ENCODE measurements at regions of chr3 and their contacts with region 1.

Region 1: DNA sequence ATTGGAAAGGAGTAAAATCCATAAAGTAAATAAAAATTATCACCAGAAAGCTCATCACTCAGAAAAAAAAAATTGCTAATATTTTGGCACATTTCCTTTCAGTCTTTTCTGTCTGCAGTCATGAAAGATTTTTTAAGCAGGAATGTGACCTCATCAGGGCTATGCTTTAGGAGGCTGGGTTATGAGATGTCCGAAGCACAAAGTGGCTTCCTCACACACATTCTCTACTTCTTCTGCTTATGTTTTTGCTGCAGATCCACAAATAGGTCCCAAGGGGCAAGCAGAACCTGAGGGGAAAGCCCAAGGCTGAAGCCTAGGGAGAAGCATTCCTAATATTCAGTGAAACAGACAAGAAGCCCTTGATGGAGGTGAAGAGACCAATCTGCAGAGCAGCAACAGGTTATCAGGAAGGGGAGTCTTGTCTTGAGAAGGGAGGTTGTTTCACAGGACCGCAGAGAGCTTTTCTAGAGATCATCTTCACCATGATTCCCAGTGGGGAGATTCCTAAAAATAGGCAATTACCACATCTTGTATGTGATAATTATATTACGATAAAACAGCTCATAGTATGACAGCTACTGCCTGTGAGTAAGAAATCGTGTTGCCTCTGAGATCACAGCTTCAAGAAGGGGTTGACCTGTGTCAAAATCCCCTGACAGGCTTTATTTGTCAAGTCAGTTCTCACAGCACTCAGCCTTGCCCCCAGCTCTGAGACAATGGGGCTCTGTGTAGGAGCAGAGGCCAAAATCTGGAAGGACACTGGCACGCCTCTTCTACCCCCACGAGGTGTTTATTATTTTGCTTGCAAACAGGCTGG is 60.5 kb downstream of the IGF2BP2 start:
- DNase-seq: no peak
- H3K4me3 ChIP-seq: no peak overlapping the region
- H3K27ac ChIP-seq: no peak overlapping the region
- H3K27me3 ChIP-seq: no peaks in the 10 kb centered on the region
- CTCF ChIP-seq: no peak

Region 2: DNA sequence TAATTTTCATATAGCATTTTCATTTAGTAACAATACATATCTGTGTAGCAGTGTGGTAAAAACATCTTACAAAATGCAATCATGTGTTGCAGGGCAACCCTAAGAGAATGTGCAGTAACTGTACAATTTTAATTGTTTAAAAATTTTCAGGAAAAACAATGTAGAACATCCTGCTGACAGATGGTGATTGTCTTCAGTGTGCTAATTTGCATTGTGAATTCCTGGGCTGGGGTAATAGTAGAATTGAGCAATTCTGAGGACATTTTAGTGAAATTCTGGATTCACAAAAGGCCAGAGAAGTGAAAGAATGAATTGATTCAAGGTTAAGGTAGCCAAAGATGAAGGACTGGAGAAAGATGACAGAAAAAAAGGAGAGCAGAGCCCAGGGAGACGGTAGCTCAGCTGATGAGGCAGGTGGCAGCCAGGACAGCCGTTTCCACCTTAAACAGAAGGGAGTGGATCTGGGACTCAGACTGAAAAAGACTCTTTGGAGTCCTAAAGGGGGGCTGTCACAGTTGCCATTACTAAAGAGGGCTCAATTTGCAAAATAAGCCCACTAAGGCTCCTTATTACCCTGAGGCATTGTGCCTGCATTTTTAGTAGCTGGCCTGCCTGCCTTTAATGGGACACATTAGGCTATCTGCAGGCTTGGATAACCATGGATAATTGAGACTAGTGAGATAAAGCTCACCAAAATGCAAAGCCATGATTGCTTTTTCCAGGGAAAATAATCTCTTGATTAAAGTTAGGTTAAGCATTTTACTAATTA is 392.9 kb before region 1 on chr3:
- CTCF ChIA-PET with region 1: no interaction called
- POLR2A ChIA-PET with region 1: no interaction called
- DNase-seq: no peak
- H3K4me3 ChIP-seq: no peak overlapping the region
- H3K27ac ChIP-seq: no peak overlapping the region
- H3K27me3 ChIP-seq: no peaks in the 10 kb centered on the region
- CTCF ChIP-seq: no peak

Region 3: GRCh38 chr3:185423178-185423577 is 341.2 kb before region 1 on chr3:
- CTCF ChIA-PET with region 1: no interaction called
- POLR2A ChIA-PET with region 1: no interaction called
- DNase-seq: no peak
- H3K4me3 ChIP-seq: no peak overlapping the region
- H3K27ac ChIP-seq: no peak overlapping the region
- H3K27me3 ChIP-seq: no peaks in the 10 kb centered on the region
- CTCF ChIP-seq: no peak

Region 4: DNA sequence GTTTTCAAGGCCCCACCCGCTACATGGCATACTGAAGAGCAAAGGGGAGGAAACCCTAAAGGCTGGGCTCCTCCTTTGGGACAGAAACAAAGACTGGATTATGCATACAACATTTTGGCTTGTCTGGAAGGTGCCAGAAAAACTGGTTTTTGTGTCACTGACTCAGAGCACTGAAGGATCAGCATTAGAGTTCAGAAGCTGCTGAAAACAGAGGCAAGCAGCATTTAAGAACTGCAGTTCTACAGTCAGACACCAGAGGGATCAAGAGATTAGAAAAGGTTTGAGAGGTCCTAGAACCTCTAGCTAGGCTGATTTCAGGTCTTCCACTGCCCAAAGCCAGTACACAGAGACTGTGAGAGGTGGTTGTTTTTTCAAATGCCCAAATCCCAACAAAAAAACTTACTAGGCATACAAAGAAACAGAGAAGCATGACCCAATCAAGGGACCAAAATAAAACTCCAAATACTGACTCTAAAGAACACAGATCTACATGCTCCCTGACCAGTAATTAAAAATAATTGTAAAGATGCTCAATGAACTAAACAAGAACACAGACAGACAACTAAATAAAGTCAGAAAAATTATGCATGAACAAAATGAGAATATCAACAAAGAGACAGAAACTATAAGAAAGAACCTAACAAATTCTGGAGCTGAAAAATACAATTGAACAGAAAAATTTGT is 87.1 kb before region 1 on chr3:
- CTCF ChIA-PET with region 1: interaction called, 14 read pairs
- POLR2A ChIA-PET with region 1: no interaction called
- DNase-seq: peak; percentile 56
- H3K4me3 ChIP-seq: no peak overlapping the region
- H3K27ac ChIP-seq: no peak overlapping the region
- H3K27me3 ChIP-seq: no peaks in the 10 kb centered on the region
- CTCF ChIP-seq: peak; percentile 84

Region 5: DNA sequence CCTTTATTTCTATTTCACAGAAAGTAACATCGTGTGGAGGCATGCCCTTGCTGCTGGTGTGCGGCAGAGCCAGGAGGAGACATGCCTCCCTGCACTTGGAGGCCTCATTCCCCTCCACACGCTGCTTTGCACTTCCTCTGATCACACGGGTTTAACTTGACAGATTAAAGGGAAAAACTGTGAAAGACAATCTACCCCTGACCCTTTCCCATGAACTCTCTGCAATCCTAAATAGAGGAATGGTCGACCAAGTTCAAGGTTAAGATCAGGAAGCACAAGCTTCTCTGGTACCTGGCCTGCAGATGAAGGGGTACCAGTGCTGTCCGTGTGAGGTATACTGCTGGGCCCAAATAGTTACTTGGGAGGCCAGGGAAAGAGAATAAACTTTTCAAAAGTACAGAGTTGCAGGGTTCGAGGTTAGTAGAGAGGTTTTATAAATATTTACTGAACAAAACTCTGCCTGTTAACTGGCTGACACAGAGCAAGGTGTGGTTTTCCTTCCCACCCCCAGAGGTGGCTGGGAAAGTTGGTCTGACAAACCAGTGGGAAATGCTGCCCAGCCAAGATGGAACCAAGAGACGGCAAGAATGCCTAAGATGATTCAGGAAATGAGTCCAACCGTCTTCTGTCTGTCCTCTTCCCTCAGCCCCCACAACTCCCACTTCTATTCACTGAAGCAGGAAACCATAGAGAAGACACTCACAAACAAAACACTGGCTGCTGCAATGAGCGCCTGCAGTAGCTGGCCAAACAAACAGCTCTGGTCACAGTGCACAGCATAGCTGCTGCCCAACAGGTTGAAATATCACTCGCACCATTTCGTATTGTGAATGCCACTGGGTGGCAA is 19.2 kb before region 1 on chr3:
- CTCF ChIA-PET with region 1: interaction called, 18 read pairs
- POLR2A ChIA-PET with region 1: interaction called, 3 read pairs
- DNase-seq: peak; percentile 64
- H3K4me3 ChIP-seq: no peak overlapping the region
- H3K27ac ChIP-seq: peak overlapping the region; percentile 71
- H3K27me3 ChIP-seq: no peaks in the 10 kb centered on the region
- CTCF ChIP-seq: no peak

Region 6: DNA sequence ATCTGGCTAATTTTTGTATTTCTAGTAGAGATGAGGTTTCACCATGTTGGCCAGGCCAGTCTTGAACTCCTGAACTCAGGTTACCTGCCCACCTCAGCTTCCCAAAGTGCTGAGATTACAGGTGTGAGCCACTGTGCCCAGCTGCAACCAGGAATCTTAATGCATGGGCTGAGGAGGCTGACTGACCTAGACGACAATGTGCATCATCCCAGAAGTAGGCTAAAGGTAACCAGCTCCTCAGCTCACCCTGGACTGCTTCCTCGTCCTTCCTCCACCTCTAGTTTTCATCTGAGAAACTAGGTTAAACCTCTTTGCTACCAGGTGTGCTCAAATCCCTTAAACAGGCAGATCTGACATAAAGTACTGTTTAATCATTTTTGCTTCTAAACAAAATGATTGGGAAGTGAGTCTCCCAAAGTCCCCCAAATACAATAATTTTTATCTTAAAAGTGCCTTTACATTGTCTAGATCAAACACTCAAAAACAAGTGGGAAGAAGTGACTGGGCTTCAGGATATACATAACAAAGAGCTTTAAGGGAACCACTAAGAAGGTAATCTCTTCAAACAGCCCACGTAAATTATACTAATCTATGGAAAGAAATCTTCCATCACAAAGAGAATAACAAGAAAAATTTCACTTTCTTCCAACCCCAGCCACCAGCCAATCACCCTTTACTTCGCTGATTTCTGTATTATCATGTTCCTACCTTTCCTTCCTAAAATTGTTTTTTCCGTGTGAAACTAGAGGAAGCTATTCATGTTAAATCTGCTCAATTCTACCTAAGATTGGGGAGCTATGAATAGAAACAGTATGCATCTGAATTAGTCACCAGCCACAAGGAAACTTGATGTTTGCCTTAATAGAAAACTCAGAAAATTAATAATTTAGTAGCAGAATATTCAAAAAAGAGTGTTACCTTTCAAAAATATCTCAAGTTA is 25.8 kb after region 1 on chr3:
- CTCF ChIA-PET with region 1: interaction called, 35 read pairs
- POLR2A ChIA-PET with region 1: no interaction called
- DNase-seq: no peak
- H3K4me3 ChIP-seq: no peak overlapping the region
- H3K27ac ChIP-seq: no peak overlapping the region
- H3K27me3 ChIP-seq: no peaks in the 10 kb centered on the region
- CTCF ChIP-seq: no peak

Region 7: GRCh38 chr3:185807445-185808068 is 43.2 kb after region 1 on chr3:
- CTCF ChIA-PET with region 1: interaction called, 10 read pairs
- POLR2A ChIA-PET with region 1: no interaction called
- DNase-seq: no peak
- H3K4me3 ChIP-seq: no peak overlapping the region
- H3K27ac ChIP-seq: no peak overlapping the region
- H3K27me3 ChIP-seq: no peaks in the 10 kb centered on the region
- CTCF ChIP-seq: no peak

Measured in AG04450 (cell line).